ENCODE measurements at regions of chr19 and their contacts with region 1.

Region 1: GRCh38 chr19:10100163-10100785 is 2.2 kb downstream of the ANGPTL6 start:
- DNase-seq: no peak
- H3K27ac ChIP-seq: no peak overlapping the region
- CTCF ChIP-seq: no peak

Region 2: DNA sequence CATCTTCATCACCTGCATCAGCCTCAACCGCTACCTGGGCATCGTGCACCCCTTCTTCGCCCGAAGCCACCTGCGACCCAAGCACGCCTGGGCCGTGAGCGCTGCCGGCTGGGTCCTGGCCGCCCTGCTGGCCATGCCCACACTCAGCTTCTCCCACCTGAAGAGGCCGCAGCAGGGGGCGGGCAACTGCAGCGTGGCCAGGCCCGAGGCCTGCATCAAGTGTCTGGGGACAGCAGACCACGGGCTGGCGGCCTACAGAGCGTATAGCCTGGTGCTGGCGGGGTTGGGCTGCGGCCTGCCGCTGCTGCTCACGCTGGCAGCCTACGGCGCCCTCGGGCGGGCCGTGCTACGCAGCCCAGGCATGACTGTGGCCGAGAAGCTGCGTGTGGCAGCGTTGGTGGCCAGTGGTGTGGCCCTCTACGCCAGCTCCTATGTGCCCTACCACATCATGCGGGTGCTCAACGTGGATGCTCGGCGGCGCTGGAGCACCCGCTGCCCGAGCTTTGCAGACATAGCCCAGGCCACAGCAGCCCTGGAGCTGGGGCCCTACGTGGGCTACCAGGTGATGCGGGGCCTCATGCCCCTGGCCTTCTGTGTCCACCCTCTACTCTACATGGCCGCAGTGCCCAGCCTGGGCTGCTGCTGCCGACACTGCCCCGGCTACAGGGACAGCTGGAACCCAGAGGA is 13.8 kb after region 1 on chr19:
- CTCF ChIA-PET with region 1: interaction called, 3 read pairs
- POLR2A ChIA-PET with region 1: interaction called, 15 read pairs
- DNase-seq: no peak
- H3K27ac ChIP-seq: peak overlapping the region; percentile 73
- CTCF ChIP-seq: no peak

Measured in RWPE1 (cell line).